Psoas muscle (tissue), 8 donors: ENCODE measurements at regions of chr7 and their contacts with region 1.

Region 1: GRCh38 chr7:150567169-150567568 is at the start of gene GIMAP4:
- DNase-seq: no peak
- ATAC-seq: peak in 1 of 4 donors; percentile 47
- H3K4me3 ChIP-seq: peak within 1 kb of the TSS; percentile 66
- H3K27ac ChIP-seq: peak within 1 kb of the TSS; percentile 72
- H3K4me1 ChIP-seq: no peaks in the 10 kb centered on the region
- H3K27me3 ChIP-seq: no peaks in the 10 kb centered on the region
- CTCF ChIP-seq: no peak
- total RNA-seq, gene GIMAP4: 14.2 to 36.4 (median 15.1) TPM

Region 2: DNA sequence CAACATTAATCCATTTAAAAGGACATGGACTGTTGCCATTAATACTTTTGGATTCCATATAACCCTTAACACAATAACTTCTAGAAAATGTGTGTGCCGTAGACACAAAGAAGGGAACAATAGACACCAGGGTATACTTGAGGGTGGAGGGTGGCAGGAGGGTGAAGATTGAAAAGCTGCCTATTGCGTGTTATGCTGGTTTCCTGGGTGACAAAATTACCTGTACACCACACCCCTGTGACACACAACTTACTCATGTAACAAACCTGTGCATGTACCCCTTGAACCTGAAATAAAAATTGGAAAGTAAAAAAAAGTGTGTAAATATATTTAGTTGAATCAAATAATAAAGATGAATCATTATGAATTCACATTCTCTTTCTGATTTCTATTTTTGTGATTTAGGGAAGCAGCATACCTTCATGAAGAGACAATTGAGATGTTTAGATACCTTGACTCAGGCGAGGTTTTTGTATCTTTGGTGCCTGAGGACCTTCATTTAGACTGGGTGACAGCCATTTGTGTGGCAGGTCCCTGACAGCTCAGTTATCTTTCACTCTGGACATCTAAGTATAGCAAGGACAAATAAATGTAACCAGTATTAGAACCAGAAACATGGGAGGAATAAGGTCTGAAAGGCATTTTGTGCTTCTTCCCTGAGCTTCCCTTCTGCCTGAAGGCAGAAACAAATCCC is 88.0 kb before region 1 on chr7:
- intact Hi-C with region 1: loop called in 1 of 2 experiments (anchors 10 kb)
- DNase-seq: no peak
- ATAC-seq: no peak
- H3K4me3 ChIP-seq: no peak overlapping the region
- H3K27ac ChIP-seq: no peak overlapping the region
- H3K4me1 ChIP-seq: no peaks in the 10 kb centered on the region
- H3K27me3 ChIP-seq: no peaks in the 10 kb centered on the region
- CTCF ChIP-seq: no peak

Region 3: DNA sequence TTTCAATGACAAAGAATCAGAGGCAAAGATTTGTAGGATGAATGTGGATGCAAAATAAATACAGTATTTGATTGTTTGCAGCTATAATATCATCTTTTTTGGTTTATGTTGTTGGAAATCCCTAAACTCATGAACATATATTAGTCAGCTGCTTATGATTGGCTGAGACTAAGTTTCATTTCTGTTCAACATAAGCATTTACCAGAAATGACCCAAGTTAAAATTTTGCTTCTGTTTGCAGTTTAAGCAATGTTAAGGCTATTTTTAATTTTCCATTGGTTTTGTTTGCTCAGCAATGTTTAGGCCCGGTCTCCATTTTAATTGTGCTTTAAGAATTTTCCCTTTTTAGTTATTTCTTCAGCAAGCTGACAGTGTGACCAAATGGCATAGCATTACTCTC is 43.1 kb after region 1 on chr7:
- intact Hi-C with region 1: no loop called
- DNase-seq: no peak
- ATAC-seq: no peak
- H3K4me3 ChIP-seq: no peak overlapping the region
- H3K27ac ChIP-seq: no peak overlapping the region
- H3K4me1 ChIP-seq: no peaks in the 10 kb centered on the region
- H3K27me3 ChIP-seq: no peaks in the 10 kb centered on the region
- CTCF ChIP-seq: no peak